ENCODE measurements at regions of chr2 and their contacts with region 1.

Region 1: DNA sequence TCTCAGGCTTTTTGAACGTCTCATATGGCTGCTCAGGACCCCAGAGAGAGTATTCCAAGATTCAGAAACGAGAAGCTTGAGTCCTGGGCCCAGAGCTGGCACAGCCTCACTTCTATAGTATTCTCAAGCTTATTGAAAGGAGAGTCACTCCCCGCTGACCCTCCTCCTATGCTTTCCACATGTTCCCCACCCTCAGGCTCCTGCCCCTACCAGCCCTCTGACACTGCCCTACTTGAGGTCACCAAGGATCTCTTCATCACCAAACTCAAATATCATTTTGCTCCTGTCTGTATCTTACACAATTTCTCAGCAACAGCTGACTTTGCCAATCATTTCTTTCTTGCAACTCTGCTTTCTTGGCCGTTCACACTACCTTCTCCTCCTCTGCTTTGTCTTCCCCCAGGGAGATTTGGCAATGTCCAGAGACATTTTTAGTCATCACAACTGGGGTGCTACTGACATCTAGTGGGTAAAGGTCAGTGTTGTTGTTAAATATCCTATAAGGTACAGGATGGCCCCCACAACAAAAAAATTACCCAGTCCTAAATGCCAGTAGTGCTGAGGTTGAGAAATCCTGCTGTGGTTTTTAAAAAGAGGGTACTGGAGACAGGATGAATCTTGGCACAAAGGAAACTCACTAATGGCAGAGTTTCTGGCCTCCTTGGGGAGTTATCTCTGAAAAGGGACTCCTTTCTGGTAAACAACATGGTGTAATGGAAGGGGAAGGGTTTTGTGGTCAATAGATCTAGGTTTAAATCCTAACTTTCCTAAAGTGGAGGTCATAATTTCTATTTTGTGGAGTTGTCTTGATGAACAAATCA is 26.9 kb upstream of the INSIG2 start:
- DNase-seq: peak in 1 of 2 experiments; percentile 48
- H3K4me3 ChIP-seq: no peak overlapping the region
- H3K4me3 Mint-ChIP-seq: no peak overlapping the region
- H3K27ac Mint-ChIP-seq: no peak overlapping the region
- H3K4me1 ChIP-seq: no peaks in the 10 kb centered on the region
- H3K4me1 Mint-ChIP-seq: no peaks in the 10 kb centered on the region
- H3K27me3 ChIP-seq: no peaks in the 10 kb centered on the region
- H3K27me3 Mint-ChIP-seq: peaks cover 3% of the 10 kb centered on the region
- CTCF ChIP-seq: peak; percentile 23 to 46

Region 2: DNA sequence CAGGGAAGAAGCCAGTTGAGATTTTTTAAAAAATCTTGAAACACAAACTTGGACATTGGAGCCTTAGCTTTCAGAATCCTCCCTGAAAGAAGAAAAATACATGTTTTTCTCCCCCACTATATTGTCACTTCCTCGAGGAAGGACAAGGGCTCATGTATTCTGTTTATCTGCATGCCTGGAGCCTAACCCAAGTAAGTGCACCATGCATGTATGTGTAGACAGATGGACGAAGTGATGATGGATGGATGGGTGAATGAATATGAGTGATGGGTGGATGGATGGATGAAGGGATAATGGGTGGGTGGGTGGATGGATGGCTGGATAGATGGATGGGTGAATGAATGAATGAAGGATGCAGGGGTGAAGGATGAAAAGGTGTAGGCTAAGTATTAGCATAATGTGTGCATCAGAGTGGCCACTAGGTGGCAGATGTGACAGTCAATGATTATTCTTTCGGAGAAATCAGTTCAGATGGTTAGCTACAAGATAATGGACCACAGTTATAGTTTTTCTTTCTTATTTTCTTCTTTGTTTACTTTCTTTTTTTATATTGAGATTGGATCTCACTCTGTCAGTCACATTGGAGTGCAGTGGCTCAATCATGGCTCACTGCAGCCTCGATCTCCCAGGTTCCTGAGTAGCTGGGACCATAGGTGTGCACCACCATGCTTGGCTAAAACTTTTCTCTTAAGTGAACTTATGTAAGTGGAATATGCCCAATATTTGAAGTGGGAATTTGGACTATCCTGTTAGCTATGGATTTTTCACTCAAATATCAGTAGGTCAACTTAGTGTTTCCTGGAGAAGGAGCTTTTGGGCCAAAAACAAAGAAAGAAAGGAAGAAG is 29.0 kb before region 1 on chr2:
- CTCF ChIA-PET with region 1: no interaction called
- POLR2A ChIA-PET with region 1: no interaction called
- intact Hi-C with region 1: loop called (anchors 1 kb)
- DNase-seq: peak in 1 of 2 experiments; percentile 42
- H3K4me3 ChIP-seq: no peak overlapping the region
- H3K4me3 Mint-ChIP-seq: no peak overlapping the region
- H3K27ac Mint-ChIP-seq: no peak overlapping the region
- H3K4me1 ChIP-seq: no peaks in the 10 kb centered on the region
- H3K4me1 Mint-ChIP-seq: no peaks in the 10 kb centered on the region
- H3K27me3 ChIP-seq: no peaks in the 10 kb centered on the region
- H3K27me3 Mint-ChIP-seq: peaks cover 19% of the 10 kb centered on the region
- CTCF ChIP-seq: peak; percentile 71 to 76

Region 3: GRCh38 chr2:118089139-118089800 is 27.9 kb after region 1 on chr2:
- CTCF ChIA-PET with region 1: no interaction called
- POLR2A ChIA-PET with region 1: no interaction called
- intact Hi-C with region 1: no loop called
- DNase-seq: peak in 1 of 2 experiments; percentile 38
- H3K4me3 ChIP-seq: peak overlapping the region; percentile 88
- H3K4me3 Mint-ChIP-seq: peak overlapping the region; percentile 82
- H3K27ac Mint-ChIP-seq: no peak overlapping the region
- H3K4me1 ChIP-seq: 0 out of 2 replicates have a peak, but pooled peaks cover 16% of the 10 kb centered on the region
- H3K4me1 Mint-ChIP-seq: no peaks in the 10 kb centered on the region
- H3K27me3 ChIP-seq: no peaks in the 10 kb centered on the region
- H3K27me3 Mint-ChIP-seq: peaks cover 2% of the 10 kb centered on the region
- CTCF ChIP-seq: peak; percentile 1 to 25

Region 4: DNA sequence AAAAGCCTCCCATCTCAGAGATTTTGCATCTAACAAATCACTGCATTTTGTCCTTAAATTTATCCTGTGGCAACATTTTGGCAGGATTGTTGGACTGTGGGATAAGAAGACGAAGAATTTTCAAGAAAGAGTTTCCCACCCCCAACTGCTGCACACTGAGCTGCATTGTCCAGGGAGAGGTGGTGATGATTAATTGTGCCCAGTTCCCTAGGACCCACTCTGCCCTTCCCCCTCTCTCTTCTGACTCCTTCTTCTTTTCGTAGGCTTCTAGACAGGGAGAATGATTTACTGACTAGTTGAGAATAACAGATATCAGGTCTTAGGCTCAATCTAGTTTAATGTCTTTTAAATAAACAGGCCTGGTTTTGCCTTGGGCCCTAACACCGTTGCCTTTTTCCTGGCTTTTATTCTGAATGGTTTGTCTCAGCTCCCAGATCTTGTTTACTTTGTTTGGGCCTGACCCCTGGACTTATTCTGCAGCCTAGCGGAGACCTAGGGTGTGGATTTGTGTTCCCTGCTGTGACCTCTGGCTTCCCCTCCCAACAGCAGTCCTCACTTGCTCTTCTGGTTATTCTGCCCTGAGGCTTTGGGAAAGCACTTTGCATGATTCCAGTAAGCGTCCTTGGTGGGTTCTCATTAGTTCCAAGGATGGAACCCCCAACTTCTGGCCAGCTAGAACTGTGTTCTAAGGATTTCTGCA is 260.2 kb after region 1 on chr2:
- CTCF ChIA-PET with region 1: no interaction called
- POLR2A ChIA-PET with region 1: no interaction called
- intact Hi-C with region 1: no loop called
- DNase-seq: peak; percentile 65 to 73
- H3K4me3 ChIP-seq: no peak overlapping the region
- H3K4me3 Mint-ChIP-seq: no peak overlapping the region
- H3K27ac Mint-ChIP-seq: no peak overlapping the region
- H3K4me1 ChIP-seq: peaks cover 12% of the 10 kb centered on the region; the same call in 1 of the 2 replicates
- H3K4me1 Mint-ChIP-seq: peaks cover 26% of the 10 kb centered on the region
- H3K27me3 ChIP-seq: no peaks in the 10 kb centered on the region
- H3K27me3 Mint-ChIP-seq: no peaks in the 10 kb centered on the region
- CTCF ChIP-seq: peak in 1 of 2 experiments; percentile 51

Region 5: GRCh38 chr2:118643294-118643693 is 581.9 kb after region 1 on chr2:
- CTCF ChIA-PET with region 1: no interaction called
- POLR2A ChIA-PET with region 1: no interaction called
- intact Hi-C with region 1: no loop called
- DNase-seq: no peak
- H3K4me3 ChIP-seq: no peak overlapping the region
- H3K4me3 Mint-ChIP-seq: no peak overlapping the region
- H3K27ac Mint-ChIP-seq: no peak overlapping the region
- H3K4me1 ChIP-seq: peaks cover 16% of the 10 kb centered on the region
- H3K4me1 Mint-ChIP-seq: no peaks in the 10 kb centered on the region
- H3K27me3 ChIP-seq: no peaks in the 10 kb centered on the region
- H3K27me3 Mint-ChIP-seq: peaks cover 5% of the 10 kb centered on the region
- CTCF ChIP-seq: no peak

Measured in Caco-2 (cell line).